ENCODE measurements at regions of chr16 and their contacts with region 1.

Region 1: GRCh38 chr16:80671281-80671849 is 130.6 kb downstream of the DYNLRB2 start:
- DNase-seq: no peak
- H3K4me3 ChIP-seq: no peak overlapping the region
- H3K27ac ChIP-seq: no peak overlapping the region
- H3K4me1 ChIP-seq: no peaks in the 10 kb centered on the region
- H3K27me3 ChIP-seq: no peaks in the 10 kb centered on the region
- CTCF ChIP-seq: no peak
- EP300 ChIP-seq: no peak
- POLR2A ChIP-seq: no peak

Region 2: DNA sequence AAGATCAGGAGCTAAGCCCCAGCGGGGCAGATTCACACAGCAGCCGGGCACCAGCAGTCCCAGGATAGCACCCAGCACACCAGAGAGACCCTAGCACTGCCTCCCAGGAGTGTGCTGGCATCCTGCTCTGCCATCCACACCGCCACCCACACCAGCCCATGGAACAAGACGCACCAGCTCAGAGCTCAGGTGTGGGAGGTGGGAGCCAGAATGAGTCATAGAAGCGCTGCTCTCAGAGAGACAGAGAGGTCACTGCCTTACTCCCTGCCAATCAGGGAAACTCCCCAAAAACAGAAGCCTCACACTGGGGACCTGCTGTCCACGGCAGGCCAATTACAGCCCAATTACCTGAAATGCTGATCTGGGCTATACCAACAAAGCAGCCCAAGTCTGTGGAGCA is 68.2 kb after region 1 on chr16:
- in situ Hi-C with region 1: loop called in 1 of 4 experiments (anchors 10 kb)
- intact Hi-C with region 1: no loop called
- DNase-seq: no peak
- H3K4me3 ChIP-seq: no peak overlapping the region
- H3K27ac ChIP-seq: no peak overlapping the region
- H3K4me1 ChIP-seq: no peaks in the 10 kb centered on the region
- H3K27me3 ChIP-seq: no peaks in the 10 kb centered on the region
- CTCF ChIP-seq: no peak
- EP300 ChIP-seq: no peak
- POLR2A ChIP-seq: no peak

Measured in transverse colon (tissue), 4 donors.